PC-3 (cell line): ENCODE measurements at regions of chr7 and their contacts with region 1.

Region 1: GRCh38 chr7:36250317-36250716 is 97.3 kb downstream of the EEPD1 start:
- DNase-seq: no peak
- ATAC-seq: no peak
- H3K4me3 ChIP-seq: no peak overlapping the region
- H3K27ac ChIP-seq: no peak overlapping the region
- H3K4me1 ChIP-seq: no peaks in the 10 kb centered on the region
- H3K27me3 ChIP-seq: no peaks in the 10 kb centered on the region
- CTCF ChIP-seq: no peak

Region 2: GRCh38 chr7:36182854-36183604 is 67.3 kb before region 1 on chr7:
- CTCF ChIA-PET with region 1: no interaction called
- POLR2A ChIA-PET with region 1: no interaction called
- intact Hi-C with region 1: no loop called
- DNase-seq: no peak
- ATAC-seq: no peak
- H3K4me3 ChIP-seq: no peak overlapping the region
- H3K27ac ChIP-seq: no peak overlapping the region
- H3K4me1 ChIP-seq: peaks cover 13% of the 10 kb centered on the region
- H3K27me3 ChIP-seq: no peaks in the 10 kb centered on the region
- CTCF ChIP-seq: no peak

Region 3: GRCh38 chr7:36198854-36199266 is 51.5 kb before region 1 on chr7:
- CTCF ChIA-PET with region 1: no interaction called
- POLR2A ChIA-PET with region 1: interaction called, 12 read pairs
- intact Hi-C with region 1: no loop called
- DNase-seq: no peak
- ATAC-seq: no peak
- H3K4me3 ChIP-seq: no peak overlapping the region
- H3K27ac ChIP-seq: no peak overlapping the region
- H3K4me1 ChIP-seq: peaks cover 22% of the 10 kb centered on the region
- H3K27me3 ChIP-seq: no peaks in the 10 kb centered on the region
- CTCF ChIP-seq: no peak